Activated CD4-positive, alpha-beta T cell treated with anti-CD3 and anti-CD28 coated beads for 36 hours (primary cell): ENCODE measurements at regions of chr11 and their contacts with region 1.

Region 1: GRCh38 chr11:66069715-66070603 is at the start of gene PACS1:
- DNase-seq: peak; percentile 83
- ATAC-seq: peak; percentile 48
- H3K4me3 Mint-ChIP-seq: peak within 1 kb of the TSS; percentile 98
- H3K27ac Mint-ChIP-seq: peak within 1 kb of the TSS; percentile 99
- H3K4me1 Mint-ChIP-seq: peaks cover 66% of the 10 kb centered on the region
- H3K27me3 Mint-ChIP-seq: no peaks in the 10 kb centered on the region
- total RNA-seq, gene PACS1: 76.6 to 90.7 TPM

Region 2: DNA sequence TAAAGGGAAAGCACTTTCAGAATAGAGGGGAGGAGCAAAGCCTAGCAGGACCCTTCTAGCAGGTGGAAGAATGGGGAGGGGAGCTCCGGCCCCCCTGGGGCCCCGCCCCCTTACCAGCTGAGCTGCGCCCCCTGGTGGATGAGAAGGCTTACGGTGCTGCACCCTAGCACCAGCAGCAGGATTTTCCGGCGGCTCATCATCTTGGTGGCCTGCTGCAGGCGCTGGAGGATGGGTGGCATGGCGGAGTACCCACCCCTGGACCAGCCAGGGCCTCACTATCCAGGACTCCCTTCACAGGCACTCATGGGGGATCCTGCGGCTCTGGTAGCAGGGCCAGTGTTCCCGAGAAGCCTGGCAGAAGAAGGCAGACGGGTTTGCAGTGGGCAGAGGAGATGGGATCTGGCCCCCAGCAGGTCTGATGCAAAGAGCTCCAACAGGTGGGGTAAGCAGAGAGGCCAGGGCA is 24.8 kb before region 1 on chr11:
- CTCF ChIA-PET with region 1: interaction called, 63 read pairs
- POLR2A ChIA-PET with region 1: no interaction called
- intact Hi-C with region 1: no loop called
- DNase-seq: peak; percentile 91
- ATAC-seq: peak; percentile 93
- H3K4me3 Mint-ChIP-seq: peak overlapping the region; percentile 21
- H3K27ac Mint-ChIP-seq: no peak overlapping the region
- H3K4me1 Mint-ChIP-seq: peaks cover 22% of the 10 kb centered on the region
- H3K27me3 Mint-ChIP-seq: peaks cover 4% of the 10 kb centered on the region

Region 3: DNA sequence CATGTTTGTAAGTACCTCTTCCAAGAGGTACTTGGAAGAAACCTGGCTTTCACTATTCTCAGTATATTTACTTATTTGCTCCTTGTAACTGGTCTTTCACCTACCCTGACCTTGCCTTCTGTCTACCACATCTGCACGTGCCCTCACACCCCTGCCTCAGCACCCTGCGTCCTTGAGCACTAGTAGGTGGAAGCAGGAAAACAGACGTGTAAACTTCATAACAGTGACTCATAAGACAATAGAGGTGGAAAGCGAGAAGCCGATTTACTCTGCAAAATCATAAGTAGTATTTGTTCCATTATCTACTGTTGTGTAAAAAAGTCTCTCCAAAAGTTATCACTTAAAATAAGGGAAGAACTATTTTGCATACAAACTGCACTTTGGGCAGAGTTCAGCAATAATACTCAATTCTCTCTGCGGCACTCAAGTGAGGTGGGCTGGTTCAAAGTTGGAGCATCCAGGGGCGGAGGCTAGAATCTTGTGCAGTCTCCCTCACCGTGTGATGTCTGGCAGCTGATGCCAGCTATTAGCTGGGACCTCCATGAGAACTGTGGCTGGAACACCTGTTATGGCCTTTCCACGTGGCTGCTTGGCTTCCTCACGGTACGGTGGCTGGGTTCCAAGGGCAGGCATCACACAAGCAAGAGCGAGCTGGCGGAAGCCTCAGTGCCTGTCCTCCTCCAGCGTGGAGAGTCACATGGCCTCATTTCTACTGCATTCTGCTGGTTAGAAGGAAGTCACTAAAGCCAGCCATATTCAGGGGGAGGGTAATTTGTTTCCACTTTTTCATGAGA is 30.5 kb after region 1 on chr11:
- CTCF ChIA-PET with region 1: interaction called, 9 read pairs
- POLR2A ChIA-PET with region 1: no interaction called
- intact Hi-C with region 1: loop called in 1 of 2 experiments (anchors 1 kb)
- DNase-seq: peak; percentile 80
- ATAC-seq: peak; percentile 91
- H3K4me3 Mint-ChIP-seq: peak overlapping the region; percentile 70
- H3K27ac Mint-ChIP-seq: peak overlapping the region; percentile 94
- H3K4me1 Mint-ChIP-seq: peaks cover 66% of the 10 kb centered on the region
- H3K27me3 Mint-ChIP-seq: no peaks in the 10 kb centered on the region

Region 4: GRCh38 chr11:66119348-66120133 is 49.6 kb after region 1 on chr11:
- CTCF ChIA-PET with region 1: interaction called, 18 read pairs
- POLR2A ChIA-PET with region 1: interaction called, 5 read pairs
- intact Hi-C with region 1: no loop called
- DNase-seq: no peak
- ATAC-seq: no peak
- H3K4me3 Mint-ChIP-seq: no peak overlapping the region
- H3K27ac Mint-ChIP-seq: peak overlapping the region; percentile 74
- H3K4me1 Mint-ChIP-seq: peaks cover 87% of the 10 kb centered on the region
- H3K27me3 Mint-ChIP-seq: no peaks in the 10 kb centered on the region

Region 5: DNA sequence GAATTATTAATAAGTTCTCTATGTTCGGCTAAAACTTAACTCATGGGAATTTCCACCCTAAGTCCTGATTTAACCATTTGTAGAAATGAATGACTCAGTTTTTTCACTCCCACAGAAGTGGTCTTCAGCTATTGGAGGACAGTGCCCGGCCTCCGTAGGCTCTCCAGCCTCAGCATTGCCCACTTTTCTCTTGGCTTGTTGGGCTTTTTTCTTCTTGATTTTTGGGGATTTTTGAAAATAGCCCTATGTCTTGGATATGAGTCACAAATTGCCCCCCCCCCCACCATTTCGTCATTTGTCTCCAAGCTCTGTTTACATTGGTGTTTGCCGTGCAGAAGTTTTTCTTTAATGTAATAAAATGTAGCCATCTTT is 66.8 kb after region 1 on chr11:
- CTCF ChIA-PET with region 1: interaction called, 17 read pairs
- POLR2A ChIA-PET with region 1: no interaction called
- intact Hi-C with region 1: loop called (anchors 1 to 2 kb)
- DNase-seq: peak; percentile 52
- ATAC-seq: no peak
- H3K4me3 Mint-ChIP-seq: no peak overlapping the region
- H3K27ac Mint-ChIP-seq: peak overlapping the region; percentile 55
- H3K4me1 Mint-ChIP-seq: peaks cover 59% of the 10 kb centered on the region
- H3K27me3 Mint-ChIP-seq: no peaks in the 10 kb centered on the region